ENCODE measurements at regions of chr11 and their contacts with region 1.

Region 1: DNA sequence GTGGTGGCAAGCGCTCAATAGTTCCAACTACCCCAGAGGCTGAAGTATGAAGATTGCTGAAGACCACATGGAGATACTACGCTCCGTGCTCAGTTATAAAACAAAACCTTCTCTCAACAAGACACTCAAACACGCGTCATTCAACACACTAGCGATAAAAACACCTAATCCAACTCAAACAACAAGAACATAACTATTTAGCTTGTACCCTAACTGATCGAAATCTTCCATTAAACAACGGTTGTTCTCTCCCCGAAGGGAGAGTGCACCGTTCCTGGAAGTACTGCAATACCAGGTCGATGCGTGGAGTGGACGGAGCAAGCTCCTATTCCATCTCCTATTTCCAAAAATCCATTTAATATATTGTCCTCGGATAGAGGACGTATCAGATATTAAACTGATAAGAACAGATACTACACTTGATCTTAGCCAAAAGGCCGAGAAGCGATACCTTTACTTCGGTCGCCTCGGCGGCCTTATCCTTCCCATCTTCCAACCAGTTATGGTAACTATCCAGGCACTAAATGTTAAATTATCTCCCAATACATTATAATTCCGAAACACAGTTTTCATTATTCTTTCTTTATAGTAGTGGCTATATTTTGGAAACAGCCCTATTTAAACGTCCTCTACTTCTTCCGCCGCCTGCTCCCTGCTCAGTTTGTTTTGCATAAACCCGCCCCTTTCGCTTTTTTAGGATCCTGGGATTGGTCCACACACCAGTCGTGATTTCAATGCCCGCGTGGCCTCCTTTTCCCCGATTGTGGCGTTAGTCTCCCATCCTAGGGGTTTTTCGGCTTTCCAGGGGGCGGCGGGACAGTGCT is 2.2 kb upstream of the WDR74 start:
- DNase-seq: peak; percentile 99
- H3K4me3 Mint-ChIP-seq: no peak overlapping the region
- H3K27ac Mint-ChIP-seq: no peak overlapping the region
- H3K4me1 Mint-ChIP-seq: peaks cover 12% of the 10 kb centered on the region
- H3K27me3 Mint-ChIP-seq: no peaks in the 10 kb centered on the region
- CTCF ChIP-seq: no peak

Region 2: DNA sequence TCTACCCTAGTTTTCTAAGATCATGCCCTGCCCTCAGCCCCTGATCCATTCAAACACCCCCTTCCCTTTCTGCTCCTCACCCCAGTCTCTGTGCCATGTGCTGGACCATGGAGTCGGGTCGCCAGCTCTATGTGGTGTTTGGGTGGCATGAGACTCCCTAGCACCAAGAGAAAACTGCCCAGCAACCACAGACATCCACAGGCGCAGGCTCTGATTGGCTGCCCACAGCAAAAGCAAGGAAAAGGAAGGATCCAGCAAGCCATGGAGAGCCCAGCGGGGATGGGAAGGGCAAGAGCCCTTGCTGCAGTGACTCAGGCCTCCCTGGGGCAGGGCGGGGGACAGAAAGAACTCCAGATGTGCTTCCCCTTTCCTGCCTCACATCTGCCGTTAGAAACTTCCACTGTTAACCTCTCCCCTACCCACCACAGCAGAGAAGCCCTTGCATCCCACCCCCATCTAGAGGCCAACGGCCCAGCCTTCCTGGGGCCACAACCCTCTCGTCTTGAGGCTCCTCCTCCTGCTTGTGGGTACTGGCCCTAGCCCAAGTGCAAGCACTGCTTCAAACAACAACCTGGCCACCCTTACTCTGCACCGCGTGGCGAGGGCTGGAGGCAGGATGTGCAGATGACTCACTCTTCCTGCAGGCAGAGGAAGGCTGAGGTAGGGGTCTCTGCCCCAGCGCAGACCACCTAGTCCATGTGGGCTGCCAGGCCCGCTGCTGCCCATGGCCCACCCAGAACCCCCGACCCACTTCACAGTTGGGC is 285.3 kb before region 1 on chr11:
- CTCF ChIA-PET with region 1: interaction called, 3 read pairs
- POLR2A ChIA-PET with region 1: interaction called, 12 read pairs
- intact Hi-C with region 1: no loop called
- DNase-seq: peak; percentile 97
- H3K4me3 Mint-ChIP-seq: peak overlapping the region; percentile 70
- H3K27ac Mint-ChIP-seq: peak overlapping the region; percentile 95
- H3K4me1 Mint-ChIP-seq: peaks cover 66% of the 10 kb centered on the region
- H3K27me3 Mint-ChIP-seq: no peaks in the 10 kb centered on the region
- CTCF ChIP-seq: no peak

Region 3: GRCh38 chr11:62671575-62672389 is 169.8 kb before region 1 on chr11 and contains the starts of genes LBHD1 and UQCC3:
- CTCF ChIA-PET with region 1: no interaction called
- POLR2A ChIA-PET with region 1: interaction called, 22 read pairs
- intact Hi-C with region 1: no loop called
- DNase-seq: peak; percentile 85
- H3K4me3 Mint-ChIP-seq: peak within 1 kb of the TSS; percentile 95
- H3K27ac Mint-ChIP-seq: peak within 1 kb of the TSS; percentile 95
- H3K4me1 Mint-ChIP-seq: peaks cover 6% of the 10 kb centered on the region
- H3K27me3 Mint-ChIP-seq: no peaks in the 10 kb centered on the region
- CTCF ChIP-seq: no peak
- total RNA-seq, gene LBHD1: 8.3 and 8.7 TPM in 2 replicates
- total RNA-seq, gene UQCC3: 11.6 and 13.8 TPM in 2 replicates

Region 4: DNA sequence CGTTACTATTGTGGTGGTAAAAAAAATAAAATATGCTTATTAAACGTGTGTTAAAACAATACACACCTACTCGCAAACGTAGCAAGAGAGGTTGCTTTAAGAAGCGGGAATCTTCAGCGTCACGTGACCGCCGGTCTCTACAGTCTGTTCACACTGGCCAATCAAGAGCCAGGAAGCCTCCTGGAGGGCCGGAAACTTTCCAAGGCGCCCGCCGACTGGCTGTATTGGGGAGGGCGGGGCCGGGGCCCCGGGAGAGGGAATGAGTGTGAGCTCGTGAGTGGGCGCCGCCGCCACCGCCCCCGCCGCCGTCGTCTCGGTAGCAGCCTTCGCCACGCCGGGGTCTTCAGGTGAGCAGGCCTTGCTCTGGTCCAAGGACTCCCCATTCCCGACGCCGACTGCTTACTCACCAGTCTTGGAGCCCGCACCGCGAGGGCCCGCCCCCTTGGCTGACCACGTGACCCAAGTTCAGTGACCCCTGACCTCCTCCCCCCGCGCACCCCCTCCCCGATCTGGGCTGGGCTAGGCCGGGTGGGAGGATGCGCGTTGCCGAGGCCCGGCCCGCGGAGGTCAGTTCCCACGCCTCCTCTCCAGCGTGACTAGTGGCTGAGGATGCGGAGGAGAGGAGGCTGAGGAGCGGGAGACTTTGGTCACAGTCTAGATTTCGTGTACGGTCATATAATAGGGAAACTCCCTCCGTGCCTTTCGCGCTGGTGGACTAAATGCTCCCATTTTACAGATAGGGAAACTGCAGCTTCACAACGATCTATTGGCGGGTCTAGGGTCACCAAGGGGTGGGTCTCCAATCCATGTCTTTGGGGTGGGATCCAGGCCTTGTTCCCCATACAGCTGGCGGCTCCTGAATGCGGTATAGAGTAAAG is 70.2 kb before region 1 on chr11 and contains the start of gene TAF6L:
- CTCF ChIA-PET with region 1: interaction called, 3 read pairs
- POLR2A ChIA-PET with region 1: interaction called, 13 read pairs
- intact Hi-C with region 1: no loop called
- DNase-seq: peak; percentile 98
- H3K4me3 Mint-ChIP-seq: peak within 1 kb of the TSS; percentile 98
- H3K27ac Mint-ChIP-seq: peak within 1 kb of the TSS; percentile 95
- H3K4me1 Mint-ChIP-seq: peaks cover 5% of the 10 kb centered on the region
- H3K27me3 Mint-ChIP-seq: no peaks in the 10 kb centered on the region
- CTCF ChIP-seq: no peak
- total RNA-seq, gene TAF6L: 11.6 and 12.0 TPM in 2 replicates

Region 5: GRCh38 chr11:62799486-62799885 is 42.1 kb before region 1 on chr11:
- CTCF ChIA-PET with region 1: interaction called, 3 read pairs
- POLR2A ChIA-PET with region 1: interaction called, 42 read pairs
- intact Hi-C with region 1: loop called (anchors 2 kb)
- DNase-seq: no peak
- H3K4me3 Mint-ChIP-seq: no peak overlapping the region
- H3K27ac Mint-ChIP-seq: no peak overlapping the region
- H3K4me1 Mint-ChIP-seq: peaks cover 8% of the 10 kb centered on the region
- H3K27me3 Mint-ChIP-seq: no peaks in the 10 kb centered on the region
- CTCF ChIP-seq: no peak

Region 6: GRCh38 chr11:62855571-62856332 is 14.2 kb after region 1 on chr11:
- CTCF ChIA-PET with region 1: interaction called, 7 read pairs
- POLR2A ChIA-PET with region 1: interaction called, 344 read pairs
- intact Hi-C with region 1: loop called (anchors 1 kb)
- DNase-seq: peak; percentile 98
- H3K4me3 Mint-ChIP-seq: peak overlapping the region; percentile 94
- H3K27ac Mint-ChIP-seq: peak overlapping the region; percentile 64
- H3K4me1 Mint-ChIP-seq: peaks cover 35% of the 10 kb centered on the region
- H3K27me3 Mint-ChIP-seq: no peaks in the 10 kb centered on the region
- CTCF ChIP-seq: no peak